Activated naive CD4-positive, alpha-beta T cell treated with anti-CD3 and anti-CD28 coated beads, Interleukin-2, amount 10 ng/mL, durations not matched to agents 7 days and 5 days (primary cell): ENCODE measurements at regions of chr6 and their contacts with region 1.

Region 1: DNA sequence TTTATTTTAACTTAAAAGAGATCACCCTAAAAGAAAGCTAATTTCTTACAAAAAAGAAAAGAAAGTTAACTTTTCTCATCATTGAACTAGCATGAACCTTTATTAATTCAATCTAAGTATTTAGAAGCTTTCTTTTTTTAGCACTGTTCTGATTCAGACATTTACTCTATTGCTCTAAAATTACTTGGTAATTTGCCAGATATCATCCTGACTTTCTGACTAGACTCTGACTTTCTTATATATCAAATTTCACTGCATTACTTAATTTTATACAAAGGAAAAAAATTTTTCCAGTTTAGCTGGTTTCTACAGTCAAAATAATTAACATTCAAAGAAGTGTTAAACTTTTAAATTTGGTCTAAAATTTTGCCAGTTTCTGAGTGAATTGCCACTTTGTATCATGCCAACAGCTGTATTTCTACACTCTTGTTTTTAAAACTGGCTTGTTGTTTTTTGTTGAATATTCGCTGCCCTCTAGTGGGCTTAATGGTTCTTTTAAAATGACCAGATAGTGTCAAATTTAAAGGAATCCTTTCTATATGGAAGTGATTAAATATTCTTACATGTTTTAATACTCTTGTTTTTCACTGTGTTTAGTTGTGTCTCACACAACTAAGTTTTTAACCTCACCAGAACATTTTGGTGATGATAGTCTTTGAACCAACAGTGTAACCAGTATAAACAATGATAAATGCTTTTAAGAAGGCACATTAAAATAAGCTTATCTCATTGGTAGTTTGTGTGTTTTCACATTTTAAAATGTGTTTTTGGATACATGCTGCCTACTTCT is 102.0 kb downstream of the POPDC3 start:
- DNase-seq: no peak
- H3K4me3 Mint-ChIP-seq: no peak overlapping the region
- H3K27ac Mint-ChIP-seq: no peak overlapping the region
- H3K4me1 Mint-ChIP-seq: no peaks in the 10 kb centered on the region
- H3K27me3 Mint-ChIP-seq: peaks cover 14% of the 10 kb centered on the region

Region 2: GRCh38 chr6:104500265-104500664 is 577.5 kb before region 1 on chr6:
- CTCF ChIA-PET with region 1: no interaction called
- DNase-seq: no peak
- H3K4me3 Mint-ChIP-seq: no peak overlapping the region
- H3K27ac Mint-ChIP-seq: no peak overlapping the region
- H3K4me1 Mint-ChIP-seq: no peaks in the 10 kb centered on the region
- H3K27me3 Mint-ChIP-seq: no peaks in the 10 kb centered on the region

Region 3: DNA sequence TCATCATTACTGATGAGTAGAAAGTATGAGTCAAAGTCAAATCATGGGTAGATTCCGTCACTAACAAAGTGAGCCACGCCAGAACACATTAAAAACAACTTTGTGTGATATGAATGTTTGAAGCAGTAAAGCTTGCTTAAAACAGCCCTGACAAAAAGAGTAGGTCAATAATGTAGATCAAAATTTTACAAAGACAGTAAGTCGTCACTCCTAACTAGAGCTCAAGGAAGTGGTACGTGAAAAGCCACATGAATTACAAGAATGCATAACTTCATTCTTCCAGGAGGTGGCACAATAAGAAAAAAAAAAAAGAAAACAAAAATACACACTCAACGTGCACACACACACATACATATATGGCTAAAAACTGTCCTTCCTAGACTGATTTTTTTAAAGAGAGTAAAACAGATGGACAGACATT is 288.0 kb before region 1 on chr6:
- CTCF ChIA-PET with region 1: interaction called, 36 read pairs
- DNase-seq: no peak
- H3K4me3 Mint-ChIP-seq: peak overlapping the region; percentile 53
- H3K27ac Mint-ChIP-seq: peak overlapping the region; percentile 90
- H3K4me1 Mint-ChIP-seq: peaks cover 40% of the 10 kb centered on the region
- H3K27me3 Mint-ChIP-seq: no peaks in the 10 kb centered on the region

Region 4: GRCh38 chr6:105336986-105337385 is 259.2 kb after region 1 on chr6:
- CTCF ChIA-PET with region 1: no interaction called
- DNase-seq: no peak
- H3K4me3 Mint-ChIP-seq: no peak overlapping the region
- H3K27ac Mint-ChIP-seq: no peak overlapping the region
- H3K4me1 Mint-ChIP-seq: no peaks in the 10 kb centered on the region
- H3K27me3 Mint-ChIP-seq: no peaks in the 10 kb centered on the region